ENCODE measurements at regions of chr12 and their contacts with region 1.

Region 1: DNA sequence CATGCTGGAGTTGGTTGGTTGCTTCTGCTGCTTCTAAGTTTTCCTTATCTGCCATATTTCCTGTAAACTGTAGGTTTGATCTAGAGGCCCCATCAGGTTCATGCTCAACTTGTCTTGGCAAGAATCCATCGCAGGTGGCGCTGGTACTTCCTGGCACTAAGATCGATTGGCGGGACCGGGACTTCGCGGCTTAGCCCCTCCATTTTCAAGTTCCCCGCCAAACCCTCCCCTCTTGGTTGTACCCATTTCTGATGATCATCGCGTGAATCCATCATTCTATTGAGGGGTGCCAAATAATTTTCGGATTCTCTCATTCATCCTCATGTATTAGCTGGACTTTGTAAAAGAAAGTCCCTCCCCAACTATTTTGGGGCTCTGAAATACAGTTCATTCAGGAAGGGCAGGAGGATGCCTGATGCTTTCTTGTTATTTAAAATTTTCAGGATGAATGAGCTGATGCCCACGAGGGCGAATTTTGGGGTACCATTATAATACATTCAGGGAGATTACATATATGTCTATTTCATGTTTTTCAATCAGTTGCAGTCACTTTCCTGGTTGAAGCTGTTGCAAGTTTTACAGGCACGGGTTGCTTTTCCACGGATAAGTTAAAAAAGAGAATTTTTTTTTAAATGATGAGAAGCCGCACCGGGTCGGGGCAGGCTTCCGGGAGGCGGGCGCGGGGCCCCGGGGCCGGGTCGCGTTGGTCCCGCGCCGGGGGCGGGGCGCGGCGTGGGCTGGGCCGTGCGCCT is 395 bp upstream of the BRI3BP start:
- DNase-seq: peak; percentile 53 to 94
- ATAC-seq: peak; percentile 50 to 80 (median 65)
- H3K4me3 ChIP-seq: peak overlapping the region; percentile 37
- H3K4me3 Mint-ChIP-seq: peak overlapping the region; percentile 96
- H3K27ac ChIP-seq: peak overlapping the region; percentile 10
- H3K27ac Mint-ChIP-seq: peak overlapping the region; percentile 65 to 76
- H3K4me1 ChIP-seq: peaks cover 40% of the 10 kb centered on the region
- H3K4me1 Mint-ChIP-seq: peaks cover 35 to 40% of the 10 kb centered on the region in 2 donors
- H3K27me3 ChIP-seq: no peaks in the 10 kb centered on the region
- H3K27me3 Mint-ChIP-seq: no peaks in the 10 kb centered on the region
- CTCF ChIP-seq: peak; percentile 54

Region 2: DNA sequence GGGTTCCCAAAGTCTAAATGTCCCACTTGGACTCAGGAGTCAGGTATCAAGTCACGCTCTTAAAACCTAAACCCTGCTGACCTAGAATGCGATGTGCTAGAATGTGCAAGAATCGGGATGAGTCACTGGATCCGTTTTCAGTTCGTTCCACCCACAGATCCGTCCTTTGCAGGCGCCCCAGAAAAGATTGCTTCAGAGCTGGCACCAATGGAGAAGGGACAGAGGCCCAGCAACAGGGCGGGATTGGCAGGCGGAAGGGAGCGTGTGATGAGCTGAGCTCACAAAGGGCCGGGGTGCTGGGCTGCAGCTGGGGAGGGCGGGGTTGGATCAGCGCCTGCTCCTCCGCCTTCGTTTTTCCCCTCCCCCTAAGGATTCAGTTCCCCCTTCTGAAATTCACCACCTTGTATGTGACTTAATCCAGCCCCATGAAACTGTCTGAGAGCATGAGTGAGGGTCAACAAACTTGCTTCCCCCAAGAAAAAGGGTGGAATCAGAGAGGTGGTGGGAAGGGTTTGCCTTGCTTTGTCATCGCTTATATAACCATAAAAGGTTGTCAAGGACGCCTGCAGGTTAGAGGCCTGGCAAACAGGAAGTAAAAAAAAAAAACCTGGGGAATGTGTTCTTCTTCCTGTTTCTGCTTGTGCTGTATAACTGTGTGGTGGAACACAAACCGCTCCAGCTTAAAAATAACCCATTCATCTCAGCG is 75.8 kb before region 1 on chr12:
- intact Hi-C with region 1: loop called (anchors 5 kb)
- DNase-seq: peak; percentile 87 to 97
- ATAC-seq: peak; percentile 71 to 88 (median 79)
- H3K4me3 ChIP-seq: peak overlapping the region; percentile 25
- H3K4me3 Mint-ChIP-seq: peak overlapping the region; percentile 92
- H3K27ac ChIP-seq: peak overlapping the region; percentile 91
- H3K27ac Mint-ChIP-seq: peak overlapping the region; percentile 100
- H3K4me1 ChIP-seq: peaks cover 74% of the 10 kb centered on the region
- H3K4me1 Mint-ChIP-seq: peaks cover 87 to 90% of the 10 kb centered on the region in 2 donors
- H3K27me3 ChIP-seq: no peaks in the 10 kb centered on the region
- H3K27me3 Mint-ChIP-seq: no peaks in the 10 kb centered on the region
- CTCF ChIP-seq: no peak

Region 3: DNA sequence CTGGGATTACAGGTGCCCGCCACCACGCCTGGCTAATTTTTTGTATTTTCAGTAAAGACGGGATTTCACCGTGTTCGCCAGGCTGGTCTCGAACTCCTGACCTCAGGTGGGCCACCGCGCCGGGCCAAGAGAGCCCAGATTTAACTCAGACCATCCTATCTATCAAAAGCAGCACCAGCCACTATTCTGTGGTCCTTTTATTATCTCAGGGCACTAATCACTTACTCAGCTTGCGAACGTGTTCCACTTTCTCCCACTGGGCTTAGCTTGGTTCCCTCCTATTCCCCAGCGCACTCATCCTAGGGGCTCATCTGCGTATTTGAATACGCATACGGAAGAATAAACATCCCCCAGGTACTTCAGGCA is 56.0 kb after region 1 on chr12:
- intact Hi-C with region 1: loop called (anchors 1 kb)
- DNase-seq: no peak
- ATAC-seq: no peak
- H3K4me3 ChIP-seq: peak overlapping the region; percentile 77
- H3K4me3 Mint-ChIP-seq: peak overlapping the region; percentile 88
- H3K27ac ChIP-seq: peak overlapping the region; percentile 60
- H3K27ac Mint-ChIP-seq: peak overlapping the region; percentile 58 to 89
- H3K4me1 ChIP-seq: peaks cover 12% of the 10 kb centered on the region
- H3K4me1 Mint-ChIP-seq: peaks cover 0 to 10% of the 10 kb centered on the region in 2 donors
- H3K27me3 ChIP-seq: no peaks in the 10 kb centered on the region
- H3K27me3 Mint-ChIP-seq: no peaks in the 10 kb centered on the region
- CTCF ChIP-seq: no peak

Region 4: GRCh38 chr12:125065021-125065795 is 72.2 kb after region 1 on chr12 and contains the start of gene AACS:
- intact Hi-C with region 1: loop called (anchors 2 kb)
- DNase-seq: peak; percentile 64 to 86
- ATAC-seq: peak; percentile 98
- H3K4me3 ChIP-seq: peak within 1 kb of the TSS; percentile 55
- H3K4me3 Mint-ChIP-seq: peak within 1 kb of the TSS; percentile 89
- H3K27ac ChIP-seq: no peak within 1 kb of the TSS
- H3K27ac Mint-ChIP-seq: peak within 1 kb of the TSS in 1 of 2 donors; percentile 78
- H3K4me1 ChIP-seq: peaks cover 12% of the 10 kb centered on the region
- H3K4me1 Mint-ChIP-seq: peaks cover 8 to 23% of the 10 kb centered on the region in 2 donors
- H3K27me3 ChIP-seq: no peaks in the 10 kb centered on the region
- H3K27me3 Mint-ChIP-seq: peaks cover 0 to 7% of the 10 kb centered on the region in 2 donors
- CTCF ChIP-seq: no peak
- total RNA-seq, gene AACS: 14.6 to 20.4 (median 18.1) TPM

Region 5: DNA sequence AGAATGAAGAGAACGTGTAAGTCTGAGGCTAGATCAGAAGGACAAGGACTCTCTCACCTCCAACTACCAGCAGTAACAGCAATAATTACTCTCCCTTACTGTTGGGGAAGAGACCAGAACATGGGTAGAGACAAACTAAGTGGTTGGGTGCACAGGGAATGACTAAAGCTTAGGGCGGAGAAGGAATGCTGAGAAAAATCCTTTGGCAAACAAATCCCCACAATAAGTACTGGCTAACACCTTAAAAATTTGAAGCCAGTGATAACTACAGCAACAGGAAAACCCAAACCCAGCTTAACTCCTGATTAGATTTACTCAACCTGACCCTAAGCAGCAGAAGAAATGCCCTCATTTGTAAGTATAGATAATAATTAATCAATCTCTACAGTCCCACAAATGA is 831.2 kb after region 1 on chr12:
- intact Hi-C with region 1: no loop called
- DNase-seq: no peak
- ATAC-seq: no peak
- H3K4me3 ChIP-seq: no peak overlapping the region
- H3K4me3 Mint-ChIP-seq: no peak overlapping the region
- H3K27ac ChIP-seq: no peak overlapping the region
- H3K27ac Mint-ChIP-seq: no peak overlapping the region
- H3K4me1 ChIP-seq: no peaks in the 10 kb centered on the region
- H3K4me1 Mint-ChIP-seq: no peaks in the 10 kb centered on the region
- H3K27me3 ChIP-seq: no peaks in the 10 kb centered on the region
- H3K27me3 Mint-ChIP-seq: no peaks in the 10 kb centered on the region
- CTCF ChIP-seq: no peak